ENCODE measurements at regions of chr5 and their contacts with region 1.

Region 1: DNA sequence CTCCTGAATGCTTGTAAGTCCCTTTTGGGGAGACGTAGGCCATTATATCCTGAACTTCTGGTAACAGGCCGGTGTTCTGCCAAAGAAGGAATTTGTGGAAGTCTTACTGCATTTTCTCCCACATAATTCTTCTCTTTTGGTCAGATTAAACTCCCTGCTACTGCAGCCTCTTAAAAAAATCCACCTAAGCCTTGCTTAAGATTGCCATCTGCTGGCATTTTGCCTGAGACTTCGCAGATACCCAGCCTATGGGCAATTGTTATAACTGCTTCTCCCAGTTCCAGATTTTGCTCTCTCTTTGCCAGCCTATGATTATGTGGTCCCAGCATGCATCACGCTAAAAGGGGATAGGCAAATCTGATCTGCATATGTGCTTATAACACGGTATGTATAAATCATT is 391.6 kb upstream of the CHD1 start:
- H3K4me3 Mint-ChIP-seq: no peak overlapping the region
- H3K27ac Mint-ChIP-seq: no peak overlapping the region
- H3K4me1 Mint-ChIP-seq: peaks cover 16% of the 10 kb centered on the region
- H3K27me3 Mint-ChIP-seq: peaks cover 9% of the 10 kb centered on the region

Region 2: GRCh38 chr5:98773464-98774191 is 546.8 kb before region 1 on chr5 and contains the start of gene RGMB:
- intact Hi-C with region 1: loop called (anchors 10 kb)
- H3K4me3 Mint-ChIP-seq: peak within 1 kb of the TSS; percentile 83
- H3K27ac Mint-ChIP-seq: peak within 1 kb of the TSS; percentile 31
- H3K4me1 Mint-ChIP-seq: peaks cover 51% of the 10 kb centered on the region
- H3K27me3 Mint-ChIP-seq: peaks cover 93% of the 10 kb centered on the region

Region 3: GRCh38 chr5:98905857-98906690 is 414.4 kb before region 1 on chr5:
- intact Hi-C with region 1: loop called (anchors 10 kb)
- H3K4me3 Mint-ChIP-seq: no peak overlapping the region
- H3K27ac Mint-ChIP-seq: no peak overlapping the region
- H3K4me1 Mint-ChIP-seq: peaks cover 22% of the 10 kb centered on the region
- H3K27me3 Mint-ChIP-seq: no peaks in the 10 kb centered on the region

Region 4: GRCh38 chr5:99104538-99105132 is 215.8 kb before region 1 on chr5:
- intact Hi-C with region 1: loop called (anchors 1 kb)
- H3K4me3 Mint-ChIP-seq: no peak overlapping the region
- H3K27ac Mint-ChIP-seq: no peak overlapping the region
- H3K4me1 Mint-ChIP-seq: no peaks in the 10 kb centered on the region
- H3K27me3 Mint-ChIP-seq: peaks cover 6% of the 10 kb centered on the region

Region 5: GRCh38 chr5:99169309-99169708 is 151.1 kb before region 1 on chr5:
- intact Hi-C with region 1: loop called (anchors 1 kb)
- H3K4me3 Mint-ChIP-seq: no peak overlapping the region
- H3K27ac Mint-ChIP-seq: no peak overlapping the region
- H3K4me1 Mint-ChIP-seq: peaks cover 5% of the 10 kb centered on the region
- H3K27me3 Mint-ChIP-seq: peaks cover 8% of the 10 kb centered on the region

Measured in dendritic cell treated with granulocyte-macrophage colony-stimulating factor and Interleukin-4, amounts not matched to agents 40 ng/mL and 50 ng/mL, for 4 days (primary cell).